ENCODE measurements at regions of chr16 and their contacts with region 1.

Region 1: GRCh38 chr16:23877107-23878090 is 41.6 kb downstream of the PRKCB start:
- DNase-seq: peak in 2 of 5 donors; percentile 17 to 24
- H3K4me3 ChIP-seq: no peak overlapping the region
- H3K4me3 Mint-ChIP-seq: no peak overlapping the region
- H3K27ac ChIP-seq: no peak overlapping the region
- H3K27ac Mint-ChIP-seq: peak overlapping the region in 5 of 7 donors; percentile 11 to 65 (median 50)
- H3K4me1 ChIP-seq: peaks cover 62% of the 10 kb centered on the region
- H3K4me1 Mint-ChIP-seq: peaks cover 45 to 73% (median 56%) of the 10 kb centered on the region in 4 donors
- H3K27me3 ChIP-seq: no peaks in the 10 kb centered on the region
- H3K27me3 Mint-ChIP-seq: no peaks in the 10 kb centered on the region

Region 2: GRCh38 chr16:23742766-23743165 is 134.6 kb before region 1 on chr16:
- CTCF ChIA-PET with region 1: no interaction called
- POLR2A ChIA-PET with region 1: no interaction called
- intact Hi-C with region 1: no loop called
- DNase-seq: no peak
- H3K4me3 ChIP-seq: no peak overlapping the region
- H3K4me3 Mint-ChIP-seq: no peak overlapping the region
- H3K27ac ChIP-seq: no peak overlapping the region
- H3K27ac Mint-ChIP-seq: peak overlapping the region in 2 of 7 donors; percentile 31 to 41
- H3K4me1 ChIP-seq: no peaks in the 10 kb centered on the region
- H3K4me1 Mint-ChIP-seq: no peaks in the 10 kb centered on the region
- H3K27me3 ChIP-seq: no peaks in the 10 kb centered on the region
- H3K27me3 Mint-ChIP-seq: peaks cover 24 to 25% of the 10 kb centered on the region in 2 donors

Region 3: DNA sequence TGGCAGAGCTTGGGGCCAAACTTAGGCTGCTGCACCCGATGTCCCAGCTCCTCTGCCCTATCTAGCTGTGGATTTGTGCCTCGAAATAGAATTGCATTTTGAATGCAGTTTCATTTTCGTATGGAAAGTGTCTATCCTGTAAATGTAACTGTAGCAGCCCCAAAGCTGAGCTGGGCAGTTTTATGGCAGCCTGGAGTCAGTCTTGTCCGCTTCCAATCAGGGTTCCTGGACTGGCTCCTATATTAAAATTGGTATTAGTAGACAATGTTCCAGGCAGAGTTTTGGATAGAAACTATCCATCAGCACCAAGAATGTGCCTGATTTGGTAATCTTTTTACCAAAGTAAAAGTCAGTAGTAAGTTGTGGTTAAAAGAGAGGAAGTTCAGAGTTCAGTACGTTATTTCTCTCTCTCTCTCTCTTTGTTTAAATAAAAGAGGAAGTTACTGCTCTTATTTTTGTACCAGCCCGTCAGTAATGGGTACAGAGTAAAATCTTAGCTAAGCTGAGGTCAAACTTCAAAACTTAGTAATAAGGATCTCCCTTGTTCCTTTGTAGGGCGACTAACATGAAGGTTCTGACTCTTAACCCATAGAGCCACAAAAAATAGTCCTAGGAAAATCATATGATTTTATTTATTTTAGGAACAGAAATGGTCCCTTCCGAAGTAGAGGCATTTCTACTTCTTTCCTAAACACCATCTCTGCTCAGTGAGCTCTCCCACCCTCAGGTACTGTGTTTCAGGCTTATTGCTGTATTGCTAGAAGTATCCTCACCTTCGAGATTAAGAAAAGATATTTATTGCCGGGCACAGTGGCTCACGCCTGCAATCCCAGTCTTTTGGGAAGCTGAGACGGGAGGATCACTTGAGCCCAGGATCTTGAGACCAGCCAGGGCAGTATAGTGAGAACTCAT is 13.6 kb before region 1 on chr16:
- CTCF ChIA-PET with region 1: interaction called, 5 read pairs
- POLR2A ChIA-PET with region 1: interaction called, 6 read pairs
- intact Hi-C with region 1: loop called (anchors 1 kb)
- DNase-seq: peak; percentile 48 to 70 (median 62)
- H3K4me3 ChIP-seq: peak overlapping the region; percentile 48 to 71
- H3K4me3 Mint-ChIP-seq: peak overlapping the region; percentile 84 to 94 (median 90)
- H3K27ac ChIP-seq: peak overlapping the region; percentile 43
- H3K27ac Mint-ChIP-seq: peak overlapping the region; percentile 86 to 96 (median 88)
- H3K4me1 ChIP-seq: peaks cover 80% of the 10 kb centered on the region
- H3K4me1 Mint-ChIP-seq: peaks cover 59 to 88% (median 77%) of the 10 kb centered on the region in 4 donors
- H3K27me3 ChIP-seq: no peaks in the 10 kb centered on the region
- H3K27me3 Mint-ChIP-seq: no peaks in the 10 kb centered on the region

Region 4: GRCh38 chr16:23893986-23894385 is 16.6 kb after region 1 on chr16:
- CTCF ChIA-PET with region 1: interaction called, 13 read pairs
- POLR2A ChIA-PET with region 1: interaction called, 4 read pairs
- intact Hi-C with region 1: no loop called
- DNase-seq: no peak
- H3K4me3 ChIP-seq: no peak overlapping the region
- H3K4me3 Mint-ChIP-seq: no peak overlapping the region
- H3K27ac ChIP-seq: no peak overlapping the region
- H3K27ac Mint-ChIP-seq: no peak overlapping the region
- H3K4me1 ChIP-seq: peaks cover 28% of the 10 kb centered on the region
- H3K4me1 Mint-ChIP-seq: peaks cover 42 to 73% (median 57%) of the 10 kb centered on the region in 4 donors
- H3K27me3 ChIP-seq: no peaks in the 10 kb centered on the region
- H3K27me3 Mint-ChIP-seq: no peaks in the 10 kb centered on the region

Region 5: DNA sequence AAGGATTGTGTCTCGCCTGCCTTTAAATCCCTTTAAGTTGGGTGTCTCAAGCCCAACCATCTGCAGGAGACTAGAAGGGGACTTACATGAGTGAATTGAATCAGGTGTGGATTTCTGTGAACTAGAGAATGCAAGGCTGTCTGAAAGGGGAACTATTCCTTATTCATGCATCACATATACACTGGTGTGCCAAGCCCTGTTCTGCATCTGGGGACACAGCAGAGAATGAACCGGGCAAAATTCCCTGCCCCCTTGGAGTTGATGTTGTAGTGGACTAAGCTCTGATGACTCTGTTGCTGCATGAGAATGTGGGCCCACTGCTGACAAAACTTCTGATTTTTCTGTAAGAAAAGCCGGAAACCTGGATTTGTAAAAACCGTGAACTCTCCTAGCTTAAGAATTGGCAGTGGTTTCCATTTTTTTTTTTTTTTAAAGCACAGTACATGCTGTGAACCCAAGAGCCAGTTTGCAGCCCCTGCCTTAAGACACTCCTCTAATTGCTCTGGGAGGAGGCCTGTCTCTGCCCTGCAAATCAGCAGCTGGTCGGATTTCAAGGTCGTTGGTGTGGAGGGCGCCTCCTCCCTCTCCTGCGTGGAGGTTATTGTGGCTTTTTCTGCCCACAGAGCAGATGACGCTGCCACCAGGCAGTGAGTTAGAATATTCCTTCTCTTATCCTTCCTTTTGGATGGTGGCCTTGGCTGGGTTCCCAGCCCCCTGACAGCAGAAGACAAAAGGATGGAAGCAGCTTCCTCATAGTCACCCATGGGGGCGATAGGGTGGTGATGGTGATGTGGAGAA is 89.4 kb after region 1 on chr16:
- CTCF ChIA-PET with region 1: interaction called, 10 read pairs
- POLR2A ChIA-PET with region 1: no interaction called
- intact Hi-C with region 1: no loop called
- DNase-seq: no peak
- H3K4me3 ChIP-seq: no peak overlapping the region
- H3K4me3 Mint-ChIP-seq: peak overlapping the region in 4 of 8 donors; percentile 12 to 54 (median 24)
- H3K27ac ChIP-seq: no peak overlapping the region
- H3K27ac Mint-ChIP-seq: peak overlapping the region in 6 of 7 donors; percentile 10 to 82 (median 40)
- H3K4me1 ChIP-seq: peaks cover 30% of the 10 kb centered on the region
- H3K4me1 Mint-ChIP-seq: peaks cover 43 to 62% (median 51%) of the 10 kb centered on the region in 4 donors
- H3K27me3 ChIP-seq: no peaks in the 10 kb centered on the region
- H3K27me3 Mint-ChIP-seq: no peaks in the 10 kb centered on the region

Region 6: GRCh38 chr16:24036614-24037013 is 159.2 kb after region 1 on chr16:
- CTCF ChIA-PET with region 1: interaction called, 34 read pairs
- POLR2A ChIA-PET with region 1: no interaction called
- intact Hi-C with region 1: loop called (anchors 2 kb)
- DNase-seq: peak in 4 of 5 donors; percentile 28 to 52 (median 34)
- H3K4me3 ChIP-seq: no peak overlapping the region
- H3K4me3 Mint-ChIP-seq: peak overlapping the region in 4 of 8 donors; percentile 9 to 91 (median 47)
- H3K27ac ChIP-seq: no peak overlapping the region
- H3K27ac Mint-ChIP-seq: peak overlapping the region in 5 of 7 donors; percentile 4 to 86 (median 59)
- H3K4me1 ChIP-seq: peaks cover 42% of the 10 kb centered on the region
- H3K4me1 Mint-ChIP-seq: peaks cover 32 to 59% (median 49%) of the 10 kb centered on the region in 4 donors
- H3K27me3 ChIP-seq: no peaks in the 10 kb centered on the region
- H3K27me3 Mint-ChIP-seq: no peaks in the 10 kb centered on the region

Region 7: DNA sequence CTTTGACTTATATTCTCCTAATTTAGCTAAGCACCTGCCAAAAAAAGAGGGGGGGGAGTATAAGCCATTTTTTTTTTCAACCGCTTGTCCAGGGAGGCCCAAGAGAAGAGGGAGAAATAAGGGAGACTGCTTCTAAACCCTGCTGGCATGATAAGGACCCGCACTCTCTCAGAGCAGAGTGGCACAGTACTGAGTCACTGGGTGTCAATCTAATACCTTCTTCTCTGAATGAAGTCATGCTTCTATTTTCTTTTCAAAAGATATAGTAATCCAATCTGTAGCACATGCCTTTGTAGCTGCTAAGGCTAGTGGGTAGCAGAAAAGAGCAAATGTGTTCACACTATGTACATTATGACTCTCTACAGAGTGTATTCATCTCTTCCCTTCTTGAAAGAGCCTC is 343.8 kb after region 1 on chr16:
- CTCF ChIA-PET with region 1: no interaction called
- POLR2A ChIA-PET with region 1: no interaction called
- intact Hi-C with region 1: no loop called
- DNase-seq: no peak
- H3K4me3 ChIP-seq: no peak overlapping the region
- H3K4me3 Mint-ChIP-seq: no peak overlapping the region
- H3K27ac ChIP-seq: no peak overlapping the region
- H3K27ac Mint-ChIP-seq: no peak overlapping the region
- H3K4me1 ChIP-seq: no peaks in the 10 kb centered on the region
- H3K4me1 Mint-ChIP-seq: no peaks in the 10 kb centered on the region
- H3K27me3 ChIP-seq: no peaks in the 10 kb centered on the region
- H3K27me3 Mint-ChIP-seq: no peaks in the 10 kb centered on the region

Measured in CD4-positive, alpha-beta memory T cell (primary cell).